Endothelial cell of umbilical vein (primary cell): ENCODE measurements at regions of chr13 and their contacts with region 1.

Region 1: DNA sequence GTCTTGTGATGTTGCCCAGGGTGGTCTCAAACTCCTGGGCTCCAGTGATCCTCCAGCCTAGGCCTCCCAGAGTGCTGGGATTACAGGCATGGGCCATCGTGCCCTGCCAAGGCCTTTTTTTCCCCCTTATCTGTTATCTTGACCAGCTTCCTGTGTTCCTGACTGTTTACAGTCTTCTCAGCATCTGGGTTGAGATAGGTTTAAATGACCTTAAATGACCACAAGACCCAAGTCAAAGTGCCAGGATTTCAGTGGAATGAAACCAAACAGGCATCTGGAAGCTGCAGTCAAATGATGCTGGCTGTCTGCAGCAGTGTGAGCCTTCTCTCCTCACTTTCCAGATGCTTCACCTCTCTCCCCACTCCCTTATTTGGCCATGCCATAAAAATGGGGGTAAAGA is 114.2 kb upstream of the CLDN10 start:
- DNase-seq: peak; percentile 19
- H3K4me3 ChIP-seq: no peak overlapping the region
- H3K27ac ChIP-seq: no peak overlapping the region
- H3K4me1 ChIP-seq: no peaks in the 10 kb centered on the region
- H3K27me3 ChIP-seq: peaks cover 4 to 9% of the 10 kb centered on the region in 2 experiments
- CTCF ChIP-seq: no peak
- POLR2A ChIP-seq: no peak

Region 2: GRCh38 chr13:95698047-95698749 is 259.9 kb after region 1 on chr13:
- CTCF ChIA-PET with region 1: no interaction called
- POLR2A ChIA-PET with region 1: interaction called, 14 read pairs
- dilution Hi-C with region 1: no loop called
- intact Hi-C with region 1: no loop called
- DNase-seq: no peak
- H3K4me3 ChIP-seq: no peak overlapping the region
- H3K27ac ChIP-seq: no peak overlapping the region
- H3K4me1 ChIP-seq: no peaks in the 10 kb centered on the region
- H3K27me3 ChIP-seq: no peaks in the 10 kb centered on the region
- CTCF ChIP-seq: peak in 1 of 2 donors; percentile 8
- POLR2A ChIP-seq: no peak